Posterior cingulate gyrus (tissue), 11 donors: ENCODE measurements at regions of chr19 and their contacts with region 1.

Region 1: GRCh38 chr19:19320362-19321142 is at the starts of genes MAU2 and SUGP1:
- DNase-seq: peak; percentile 76 to 99 (median 87)

Region 2: DNA sequence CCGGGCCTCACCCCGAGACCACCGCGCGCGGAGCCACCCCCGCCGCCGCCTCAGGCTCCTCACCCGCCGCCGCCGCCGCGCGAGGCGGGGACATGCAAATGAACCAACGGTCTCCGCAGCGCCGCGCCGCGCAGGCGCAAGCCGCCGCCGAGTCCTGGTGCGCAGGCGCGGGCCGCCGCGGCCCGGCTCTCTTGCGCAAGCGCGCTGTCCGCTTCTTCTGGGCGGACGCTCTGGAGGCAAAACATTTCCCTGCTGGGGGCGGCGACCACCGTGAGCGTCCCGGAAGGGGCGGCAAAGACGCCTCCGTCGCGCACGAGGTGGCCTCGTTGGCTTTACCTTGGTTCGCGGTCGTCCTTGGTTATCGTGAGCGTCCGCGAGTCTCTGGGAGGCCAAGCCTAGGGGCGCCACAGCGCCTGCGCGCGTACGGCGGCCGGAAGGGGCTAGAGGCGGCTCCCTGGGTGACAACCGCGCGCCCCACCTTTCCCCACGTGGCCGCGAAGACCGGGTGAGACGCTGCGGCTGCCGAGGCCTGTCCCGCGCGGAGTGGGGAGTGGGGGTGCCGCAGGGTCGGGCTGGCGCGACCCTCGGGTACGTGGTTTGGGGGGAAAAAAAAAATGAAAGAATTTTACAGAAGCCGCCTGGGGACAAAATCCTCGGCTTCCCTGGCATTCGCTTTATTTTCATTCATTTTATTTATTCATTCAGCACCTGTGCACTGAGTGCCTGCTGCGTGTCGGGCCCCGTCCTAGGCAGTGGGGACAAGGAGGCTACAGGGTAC is 286.9 kb before region 1 on chr19 and contains the starts of genes ARMC6 and SUGP2:
- intact Hi-C with region 1: loop called (anchors 10 kb)
- DNase-seq: peak; percentile 74 to 97 (median 84)

Region 3: GRCh38 chr19:19203012-19203856 is 117.3 kb before region 1 on chr19 and contains the start of gene NR2C2AP:
- intact Hi-C with region 1: loop called (anchors 5 kb)
- DNase-seq: peak; percentile 85 to 99 (median 92)

Region 4: GRCh38 chr19:19348266-19348665 is 27.7 kb after region 1 on chr19:
- intact Hi-C with region 1: no loop called
- DNase-seq: peak in 4 of 10 donors; percentile 26 to 84 (median 55)

Region 5: GRCh38 chr19:19385108-19385899 is 64.8 kb after region 1 on chr19:
- intact Hi-C with region 1: loop called (anchors 2 kb)
- DNase-seq: peak; percentile 99 to 100 (median 100)